ENCODE measurements at regions of chr19 and their contacts with region 1.

Region 1: GRCh38 chr19:41785653-41786052 is 10.7 kb upstream of the CEACAM3 start:
- DNase-seq: peak; percentile 84
- ATAC-seq: peak; percentile 93
- H3K4me3 ChIP-seq: peak overlapping the region in 2 of 5 experiments; percentile 11 to 22
- H3K4me3 Mint-ChIP-seq: peak overlapping the region; percentile 74
- H3K27ac ChIP-seq: no peak overlapping the region
- H3K27ac Mint-ChIP-seq: no peak overlapping the region
- H3K4me1 ChIP-seq: peaks cover 24 to 26% of the 10 kb centered on the region in 2 donors
- H3K4me1 Mint-ChIP-seq: peaks cover 25% of the 10 kb centered on the region
- H3K27me3 ChIP-seq: peaks cover 0 to 10% (median 0%) of the 10 kb centered on the region in 4 experiments
- H3K27me3 Mint-ChIP-seq: peaks cover 32% of the 10 kb centered on the region
- CTCF ChIP-seq: peak; percentile 88

Region 2: GRCh38 chr19:41706741-41707501 is 78.7 kb before region 1 on chr19:
- CTCF ChIA-PET with region 1: interaction called, 3 read pairs
- POLR2A ChIA-PET with region 1: no interaction called
- intact Hi-C with region 1: loop called (anchors 1 kb)
- DNase-seq: peak; percentile 83
- ATAC-seq: peak; percentile 85
- H3K4me3 ChIP-seq: peak overlapping the region in 4 of 5 experiments; percentile 20 to 51 (median 35)
- H3K4me3 Mint-ChIP-seq: peak overlapping the region; percentile 71
- H3K27ac ChIP-seq: no peak overlapping the region
- H3K27ac Mint-ChIP-seq: no peak overlapping the region
- H3K4me1 ChIP-seq: peaks cover 0 to 4% of the 10 kb centered on the region in 2 donors
- H3K4me1 Mint-ChIP-seq: peaks cover 4% of the 10 kb centered on the region
- H3K27me3 ChIP-seq: peaks cover 0 to 29% (median 7%) of the 10 kb centered on the region in 4 experiments
- H3K27me3 Mint-ChIP-seq: peaks cover 51% of the 10 kb centered on the region
- CTCF ChIP-seq: peak; percentile 98

Region 3: GRCh38 chr19:41801792-41802211 is 16.1 kb after region 1 on chr19:
- CTCF ChIA-PET with region 1: interaction called, 63 read pairs
- POLR2A ChIA-PET with region 1: no interaction called
- intact Hi-C with region 1: no loop called
- DNase-seq: peak; percentile 68
- ATAC-seq: peak; percentile 53
- H3K4me3 ChIP-seq: peak overlapping the region in 2 of 5 experiments; percentile 1 to 15
- H3K4me3 Mint-ChIP-seq: peak overlapping the region; percentile 50
- H3K27ac ChIP-seq: peak overlapping the region; percentile 37 to 81
- H3K27ac Mint-ChIP-seq: peak overlapping the region; percentile 86
- H3K4me1 ChIP-seq: peaks cover 29 to 46% of the 10 kb centered on the region in 2 donors
- H3K4me1 Mint-ChIP-seq: peaks cover 41% of the 10 kb centered on the region
- H3K27me3 ChIP-seq: no peaks in the 10 kb centered on the region
- H3K27me3 Mint-ChIP-seq: no peaks in the 10 kb centered on the region
- CTCF ChIP-seq: no peak

Measured in B cell (primary cell).